ENCODE measurements at regions of chr21 and their contacts with region 1.

Region 1: GRCh38 chr21:39924577-39925308 is 57.5 kb downstream of the PCP4 start:
- DNase-seq: no peak
- ATAC-seq: no peak

Region 2: DNA sequence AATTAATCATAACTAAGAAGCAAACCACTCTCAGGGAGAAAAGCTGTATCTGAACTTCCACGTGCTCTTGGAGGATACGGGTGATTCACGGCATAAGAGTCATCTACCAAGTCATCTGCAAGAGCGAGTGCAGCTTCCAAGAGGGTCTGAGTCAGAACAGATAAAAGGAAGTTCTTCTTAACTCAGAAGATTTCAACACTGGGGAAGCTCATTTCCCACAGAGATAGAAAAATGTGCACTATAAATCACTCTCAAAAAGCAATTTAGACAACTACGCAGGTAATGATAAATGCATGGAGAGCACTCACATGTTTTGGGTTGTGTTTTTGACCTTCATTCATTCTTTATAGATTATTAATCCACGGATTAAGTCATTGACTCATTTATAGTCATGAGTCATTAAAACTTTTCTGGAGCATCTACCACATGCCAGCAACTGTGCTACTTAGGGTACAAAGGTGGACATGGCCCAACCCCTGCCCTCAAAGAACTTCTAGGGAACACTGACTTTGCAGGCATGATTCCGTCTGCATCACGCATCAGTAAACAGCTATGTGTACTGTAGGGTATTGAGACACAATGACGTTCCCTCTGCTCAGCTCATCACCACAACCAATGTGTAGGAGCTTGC is 1647.1 kb before region 1 on chr21:
- intact Hi-C with region 1: no loop called
- DNase-seq: no peak
- ATAC-seq: peak; percentile 93

Region 3: GRCh38 chr21:39564200-39564599 is 360.5 kb before region 1 on chr21:
- intact Hi-C with region 1: loop called (anchors 5 kb)
- DNase-seq: no peak
- ATAC-seq: no peak

Region 4: DNA sequence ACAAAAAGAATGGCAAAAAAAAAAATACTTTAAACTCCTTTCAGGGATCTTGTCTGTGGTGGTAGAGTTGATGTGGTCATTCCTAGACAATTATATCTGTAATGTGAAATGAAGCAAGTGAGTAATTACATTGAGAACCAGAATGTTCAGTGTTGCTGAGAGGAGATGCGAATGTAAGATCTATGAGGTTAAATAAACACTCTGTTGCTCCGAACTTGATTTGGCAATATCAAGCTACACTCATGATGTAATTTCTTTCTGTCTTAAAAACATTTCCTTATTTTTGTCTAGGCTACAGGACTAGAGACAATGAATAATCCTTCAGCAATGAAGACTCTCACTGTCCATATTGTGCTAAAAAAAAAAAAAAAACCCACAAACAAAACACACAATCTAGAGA is 242.9 kb before region 1 on chr21:
- intact Hi-C with region 1: no loop called
- DNase-seq: no peak
- ATAC-seq: no peak

Measured in sciatic nerve (tissue), 2 donors.